CD8-positive, alpha-beta T cell (primary cell): ENCODE measurements at regions of chr17 and their contacts with region 1.

Region 1: DNA sequence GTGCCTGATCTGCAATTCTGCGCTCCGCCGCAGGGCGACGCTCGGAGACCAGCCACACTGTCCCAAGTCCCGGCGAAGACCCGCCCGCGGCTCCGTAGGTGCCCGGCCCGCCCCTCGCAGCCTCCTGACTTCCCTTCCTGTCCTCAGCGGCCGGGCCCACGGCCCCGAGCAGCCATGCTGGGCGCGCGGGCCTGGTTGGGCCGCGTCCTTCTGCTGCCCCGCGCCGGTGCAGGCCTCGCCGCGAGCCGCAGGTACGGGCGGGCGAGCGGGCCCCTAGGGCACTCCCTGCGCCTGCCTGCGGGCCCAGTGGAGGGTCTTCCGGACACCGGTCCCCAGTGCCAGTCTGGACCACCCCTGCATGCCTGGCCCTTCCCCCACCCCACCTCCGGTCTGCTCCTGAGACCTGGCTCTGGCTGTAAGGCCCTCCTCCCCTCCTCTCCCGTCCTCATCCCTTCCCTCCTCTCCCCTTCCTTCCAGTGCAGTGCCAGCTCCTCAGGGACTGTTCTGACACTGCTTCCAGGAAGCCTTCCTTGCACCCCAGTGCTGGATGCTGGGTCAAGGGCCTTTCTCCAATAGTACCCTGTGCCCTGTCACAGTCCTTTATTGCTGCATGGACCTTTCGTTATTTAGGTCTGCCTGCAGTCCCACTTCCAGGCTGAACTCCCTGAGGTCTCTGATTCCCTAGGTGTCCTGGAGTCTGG is at the start of gene SPATA20:
- DNase-seq: peak; percentile 72 to 93 (median 84)
- ATAC-seq: peak; percentile 88
- H3K4me3 ChIP-seq: peak within 1 kb of the TSS; percentile 57 to 65
- H3K4me3 Mint-ChIP-seq: peak within 1 kb of the TSS; percentile 81
- H3K27ac ChIP-seq: peak within 1 kb of the TSS; percentile 34 to 63
- H3K27ac Mint-ChIP-seq: peak within 1 kb of the TSS; percentile 55
- H3K4me1 ChIP-seq: peaks cover 20% of the 10 kb centered on the region
- H3K4me1 Mint-ChIP-seq: peaks cover 17% of the 10 kb centered on the region
- H3K27me3 ChIP-seq: no peaks in the 10 kb centered on the region
- H3K27me3 Mint-ChIP-seq: peaks cover 6% of the 10 kb centered on the region
- CTCF ChIP-seq: peak; percentile 95
- total RNA-seq, gene SPATA20: 33.0 to 37.2 TPM

Region 2: DNA sequence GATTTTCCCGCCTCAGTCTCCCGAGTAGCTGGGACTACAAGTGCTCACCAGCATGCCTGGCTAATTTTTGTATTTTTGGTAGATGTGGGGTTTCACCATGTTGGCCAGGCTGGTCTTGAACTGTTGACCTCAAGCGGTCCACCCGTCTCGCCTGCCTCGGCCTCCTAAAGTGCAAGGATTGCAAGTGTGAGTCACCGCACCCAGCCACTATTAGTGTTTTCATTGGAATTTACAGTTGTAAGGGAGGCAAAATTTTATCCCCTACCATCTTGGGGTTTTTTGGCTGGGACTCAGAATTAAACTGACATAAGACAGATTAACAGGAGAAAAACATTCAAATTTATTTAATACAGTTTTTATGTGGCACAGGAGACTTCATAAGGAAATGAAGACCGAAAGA is 51.3 kb before region 1 on chr17:
- CTCF ChIA-PET with region 1: no interaction called
- POLR2A ChIA-PET with region 1: no interaction called
- intact Hi-C with region 1: no loop called
- DNase-seq: no peak
- ATAC-seq: no peak
- H3K4me3 ChIP-seq: no peak overlapping the region
- H3K4me3 Mint-ChIP-seq: no peak overlapping the region
- H3K27ac ChIP-seq: no peak overlapping the region
- H3K27ac Mint-ChIP-seq: no peak overlapping the region
- H3K4me1 ChIP-seq: no peaks in the 10 kb centered on the region
- H3K4me1 Mint-ChIP-seq: no peaks in the 10 kb centered on the region
- H3K27me3 ChIP-seq: no peaks in the 10 kb centered on the region
- H3K27me3 Mint-ChIP-seq: no peaks in the 10 kb centered on the region
- CTCF ChIP-seq: no peak

Region 3: DNA sequence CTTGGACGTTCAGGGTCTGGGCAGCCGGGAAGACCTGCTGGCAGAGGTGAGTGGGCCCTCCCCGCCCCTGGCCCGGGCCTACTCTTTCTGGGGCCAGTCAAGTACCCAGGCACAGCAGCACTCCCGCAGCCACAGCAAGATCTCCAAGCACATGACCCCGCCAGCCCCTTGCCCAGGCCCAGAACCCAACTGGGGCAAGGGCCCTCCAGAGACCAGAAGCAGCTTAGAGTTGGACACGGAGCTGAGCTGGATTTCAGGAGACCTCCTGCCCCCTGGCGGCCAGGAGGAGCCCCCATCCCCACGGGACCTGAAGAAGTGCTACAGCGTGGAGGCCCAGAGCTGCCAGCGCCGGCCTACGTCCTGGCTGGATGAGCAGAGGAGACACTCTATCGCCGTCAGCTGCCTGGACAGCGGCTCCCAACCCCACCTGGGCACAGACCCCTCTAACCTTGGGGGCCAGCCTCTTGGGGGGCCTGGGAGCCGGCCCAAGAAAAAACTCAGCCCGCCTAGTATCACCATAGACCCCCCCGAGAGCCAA is 78.9 kb after region 1 on chr17:
- CTCF ChIA-PET with region 1: interaction called, 48 read pairs
- POLR2A ChIA-PET with region 1: no interaction called
- intact Hi-C with region 1: loop called in 1 of 2 experiments (anchors 1 kb)
- DNase-seq: peak; percentile 30 to 75 (median 63)
- ATAC-seq: peak; percentile 67
- H3K4me3 ChIP-seq: no peak overlapping the region
- H3K4me3 Mint-ChIP-seq: no peak overlapping the region
- H3K27ac ChIP-seq: no peak overlapping the region
- H3K27ac Mint-ChIP-seq: no peak overlapping the region
- H3K4me1 ChIP-seq: no peaks in the 10 kb centered on the region
- H3K4me1 Mint-ChIP-seq: no peaks in the 10 kb centered on the region
- H3K27me3 ChIP-seq: peaks cover 5 to 13% of the 10 kb centered on the region in 2 experiments
- H3K27me3 Mint-ChIP-seq: peaks cover 42% of the 10 kb centered on the region
- CTCF ChIP-seq: peak; percentile 59

Region 4: GRCh38 chr17:50697663-50698274 is 150.6 kb after region 1 on chr17:
- CTCF ChIA-PET with region 1: interaction called, 3 read pairs
- POLR2A ChIA-PET with region 1: no interaction called
- intact Hi-C with region 1: loop called (anchors 1 kb)
- DNase-seq: peak in 1 of 9 experiments; percentile 28
- ATAC-seq: no peak
- H3K4me3 ChIP-seq: no peak overlapping the region
- H3K4me3 Mint-ChIP-seq: no peak overlapping the region
- H3K27ac ChIP-seq: no peak overlapping the region
- H3K27ac Mint-ChIP-seq: peak overlapping the region; percentile 39
- H3K4me1 ChIP-seq: no peaks in the 10 kb centered on the region
- H3K4me1 Mint-ChIP-seq: peaks cover 19% of the 10 kb centered on the region
- H3K27me3 ChIP-seq: no peaks in the 10 kb centered on the region
- H3K27me3 Mint-ChIP-seq: no peaks in the 10 kb centered on the region
- CTCF ChIP-seq: no peak

Region 5: GRCh38 chr17:50841949-50842354 is 294.8 kb after region 1 on chr17:
- CTCF ChIA-PET with region 1: interaction called, 8 read pairs
- POLR2A ChIA-PET with region 1: no interaction called
- intact Hi-C with region 1: loop called in 1 of 2 experiments (anchors 1 kb)
- DNase-seq: peak in 8 of 9 experiments; percentile 21 to 67 (median 51)
- ATAC-seq: peak; percentile 69
- H3K4me3 ChIP-seq: no peak overlapping the region
- H3K4me3 Mint-ChIP-seq: no peak overlapping the region
- H3K27ac ChIP-seq: no peak overlapping the region
- H3K27ac Mint-ChIP-seq: no peak overlapping the region
- H3K4me1 ChIP-seq: no peaks in the 10 kb centered on the region
- H3K4me1 Mint-ChIP-seq: no peaks in the 10 kb centered on the region
- H3K27me3 ChIP-seq: no peaks in the 10 kb centered on the region
- H3K27me3 Mint-ChIP-seq: no peaks in the 10 kb centered on the region
- CTCF ChIP-seq: peak; percentile 62

Region 6: DNA sequence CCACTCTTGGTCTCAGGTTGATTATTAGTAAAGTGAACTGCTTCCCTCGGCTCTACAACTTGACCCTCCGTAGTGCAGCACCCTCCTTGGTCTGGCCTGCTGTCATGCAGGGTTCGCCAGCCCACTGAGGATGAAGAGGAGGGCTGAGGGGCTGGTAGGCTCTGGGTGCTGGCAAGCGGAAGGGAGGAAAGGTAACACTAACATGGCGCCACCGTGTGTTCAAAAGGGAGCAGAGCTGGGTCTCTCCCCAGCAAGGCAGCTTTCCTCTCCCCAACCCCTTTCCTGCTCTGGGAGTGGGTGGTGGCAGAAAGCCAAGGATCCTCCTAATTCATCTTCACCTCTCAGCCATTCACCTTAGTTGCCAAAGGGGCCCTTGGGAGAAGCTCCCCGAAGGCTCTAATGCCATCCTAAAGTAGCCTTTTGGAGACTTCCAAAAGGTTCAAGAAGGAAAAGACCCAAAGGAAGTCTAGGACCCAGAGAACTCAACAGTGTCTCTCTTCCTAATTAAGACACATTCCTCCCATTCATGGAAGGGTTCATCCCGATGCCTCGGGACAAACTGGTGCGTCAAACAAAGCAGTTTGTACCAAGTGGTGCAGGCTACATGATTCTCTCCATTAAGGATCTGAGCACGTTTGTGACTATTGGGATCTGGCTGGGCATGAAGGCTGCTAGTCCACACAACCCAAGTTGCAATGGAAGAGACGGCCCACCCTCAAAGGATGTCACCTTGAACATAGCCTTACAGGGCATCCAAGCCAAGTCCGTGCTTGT is 409.8 kb after region 1 on chr17:
- CTCF ChIA-PET with region 1: interaction called, 3 read pairs
- POLR2A ChIA-PET with region 1: no interaction called
- intact Hi-C with region 1: loop called (anchors 5 to 10 kb)
- DNase-seq: peak; percentile 39 to 81 (median 71)
- ATAC-seq: peak; percentile 93
- H3K4me3 ChIP-seq: no peak overlapping the region
- H3K4me3 Mint-ChIP-seq: no peak overlapping the region
- H3K27ac ChIP-seq: no peak overlapping the region
- H3K27ac Mint-ChIP-seq: no peak overlapping the region
- H3K4me1 ChIP-seq: peaks cover 4% of the 10 kb centered on the region
- H3K4me1 Mint-ChIP-seq: peaks cover 3% of the 10 kb centered on the region
- H3K27me3 ChIP-seq: no peaks in the 10 kb centered on the region
- H3K27me3 Mint-ChIP-seq: no peaks in the 10 kb centered on the region
- CTCF ChIP-seq: peak; percentile 79